PC-9 (cell line): ENCODE measurements at regions of chr2 and their contacts with region 1.

Region 1: DNA sequence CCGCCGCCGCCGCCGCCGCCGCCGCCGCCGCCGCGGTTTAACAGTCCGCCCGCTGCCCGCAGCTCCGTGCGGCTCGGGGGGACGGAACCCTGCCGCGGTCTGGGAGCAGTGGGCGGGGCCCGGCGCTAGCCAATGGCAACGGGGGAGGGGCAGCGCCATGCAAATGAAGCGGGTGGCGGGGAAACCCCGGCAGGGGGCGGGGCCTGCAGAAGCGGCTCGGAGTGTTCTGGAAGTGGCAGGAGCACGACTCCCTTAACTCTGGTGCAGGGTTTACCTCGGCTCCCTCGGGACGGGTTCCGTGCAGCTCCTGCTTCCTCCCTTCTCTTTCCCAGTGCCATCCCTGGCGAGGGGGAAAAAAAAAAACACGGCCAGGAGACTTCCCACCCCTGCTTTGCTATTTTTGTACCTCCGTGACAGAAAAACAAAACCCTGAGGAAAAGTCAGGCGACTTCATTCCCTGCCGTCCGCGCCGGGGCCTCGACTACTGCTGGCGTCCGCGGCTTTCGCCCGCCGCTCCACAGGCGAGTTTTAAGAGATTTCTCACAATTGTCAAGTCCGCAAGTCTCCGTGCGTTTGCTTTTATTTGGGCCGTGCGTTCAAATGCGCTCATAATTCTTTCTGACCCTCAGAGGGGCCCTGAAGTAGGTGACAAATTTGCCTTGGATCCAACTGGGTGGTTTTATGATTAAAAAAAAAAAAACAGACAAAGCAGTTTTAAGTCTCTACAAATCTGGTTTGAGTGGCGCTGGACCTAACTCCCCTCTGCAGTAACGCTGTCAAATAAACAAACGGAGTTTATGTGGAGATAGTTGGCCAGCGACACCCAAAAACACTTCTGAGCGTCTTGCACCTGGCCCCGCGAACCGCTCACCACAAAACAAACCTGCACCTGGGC is at the start of gene KANSL1L:
- DNase-seq: peak; percentile 75 to 94
- H3K4me3 ChIP-seq: peak within 1 kb of the TSS; percentile 83
- H3K27ac ChIP-seq: peak within 1 kb of the TSS; percentile 91
- H3K4me1 ChIP-seq: peaks cover 17% of the 10 kb centered on the region
- H3K27me3 ChIP-seq: no peaks in the 10 kb centered on the region
- CTCF ChIP-seq: no peak
- total RNA-seq, gene KANSL1L: 8.6 and 8.8 TPM in 2 replicates

Region 2: DNA sequence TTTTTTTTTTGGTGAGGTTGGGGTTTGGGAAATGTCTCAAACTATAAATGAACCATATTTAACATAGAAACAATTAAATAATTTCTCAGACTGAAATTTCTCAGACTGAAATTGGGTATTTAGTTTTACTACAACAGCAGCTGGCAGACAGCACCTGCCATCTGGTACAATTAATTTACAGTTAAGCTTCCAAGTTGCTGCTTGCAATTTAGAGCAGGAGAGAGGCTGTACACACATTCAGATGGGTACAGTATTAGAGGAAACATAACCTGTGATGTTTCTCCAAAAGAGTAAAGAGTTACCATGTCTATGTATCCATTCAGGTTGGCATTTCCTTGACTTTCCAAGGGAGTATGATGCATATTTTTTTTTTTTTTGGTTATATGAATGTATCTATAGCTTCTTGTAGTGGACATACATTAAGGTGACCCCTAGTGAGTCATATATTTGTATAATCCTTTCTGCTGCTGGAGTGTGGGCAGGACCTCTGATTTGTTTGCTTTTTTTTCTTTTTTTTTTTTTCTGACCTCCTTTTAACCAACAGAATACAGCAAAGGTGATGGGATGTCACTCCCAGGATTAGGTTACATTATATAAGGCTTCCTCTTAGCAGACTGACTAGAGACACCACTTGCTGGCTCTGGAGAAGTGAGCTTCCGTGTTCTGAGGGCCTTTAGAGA is 1563.3 kb before region 1 on chr2:
- CTCF ChIA-PET with region 1: no interaction called
- POLR2A ChIA-PET with region 1: interaction called, 17 read pairs
- intact Hi-C with region 1: no loop called
- DNase-seq: peak in 1 of 2 experiments; percentile 47
- H3K4me3 ChIP-seq: no peak overlapping the region
- H3K27ac ChIP-seq: no peak overlapping the region
- H3K4me1 ChIP-seq: peaks cover 7% of the 10 kb centered on the region; the same call in 1 of the 2 replicates
- H3K27me3 ChIP-seq: no peaks in the 10 kb centered on the region
- CTCF ChIP-seq: no peak

Region 3: GRCh38 chr2:210002158-210003157 is 169.1 kb before region 1 on chr2 and contains the start of gene RPE:
- CTCF ChIA-PET with region 1: no interaction called
- POLR2A ChIA-PET with region 1: no interaction called
- intact Hi-C with region 1: loop called (anchors 2 kb)
- DNase-seq: peak; percentile 82 to 89
- H3K4me3 ChIP-seq: peak within 1 kb of the TSS; percentile 77
- H3K27ac ChIP-seq: peak within 1 kb of the TSS; percentile 40; the same call in 1 of the 2 replicates
- H3K4me1 ChIP-seq: peaks cover 13% of the 10 kb centered on the region
- H3K27me3 ChIP-seq: no peaks in the 10 kb centered on the region
- CTCF ChIP-seq: no peak
- total RNA-seq, gene RPE: 58.4 and 63.7 TPM in 2 replicates